ENCODE measurements at regions of chr3 and their contacts with region 1.

Region 1: GRCh38 chr3:71129611-71130431 is 453.7 kb downstream of the FOXP1 start:
- DNase-seq: no peak
- H3K4me3 ChIP-seq: peak overlapping the region; percentile 29 to 39
- H3K27ac ChIP-seq: peak overlapping the region; percentile 82 to 88
- H3K4me1 ChIP-seq: peaks cover 28% of the 10 kb centered on the region
- H3K27me3 ChIP-seq: no peaks in the 10 kb centered on the region
- CTCF ChIP-seq: no peak
- POLR2A ChIP-seq: no peak

Region 2: DNA sequence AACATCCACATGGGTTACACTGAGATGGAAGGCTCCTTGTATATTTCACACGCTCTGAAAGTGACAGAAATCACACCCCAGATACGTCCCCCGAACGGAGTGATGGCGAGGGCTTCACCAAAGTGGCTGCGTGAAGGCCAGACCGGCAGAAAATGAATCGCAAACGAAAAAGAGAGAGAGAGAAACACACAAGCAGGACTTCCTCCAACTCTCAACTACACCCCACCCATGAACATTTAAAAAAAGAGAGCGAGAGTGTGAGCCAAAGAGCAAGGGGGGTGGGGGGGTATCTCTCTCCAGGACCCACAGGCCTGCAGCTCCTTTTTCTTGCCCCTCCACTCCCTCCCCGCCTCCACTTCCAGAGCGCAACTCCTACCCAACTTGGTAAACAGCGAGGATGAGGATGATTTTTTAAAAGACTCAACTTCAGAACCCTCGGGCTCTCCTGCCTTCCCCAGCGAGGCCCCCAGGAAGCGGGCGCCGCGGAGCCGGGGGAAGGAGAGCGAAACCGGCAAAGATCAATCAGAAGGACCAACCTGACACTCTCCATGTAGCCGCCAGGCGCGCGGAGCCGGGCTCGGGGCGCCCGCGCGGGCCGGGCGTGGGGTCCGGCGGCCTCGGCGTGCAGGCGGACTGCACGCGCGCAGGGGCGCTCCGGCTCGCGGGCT is 65.4 kb before region 1 on chr3:
- intact Hi-C with region 1: loop called (anchors 2 kb)
- DNase-seq: peak; percentile 39
- H3K4me3 ChIP-seq: peak overlapping the region; percentile 58 to 67
- H3K27ac ChIP-seq: peak overlapping the region; percentile 96 to 99
- H3K4me1 ChIP-seq: peaks cover 11% of the 10 kb centered on the region
- H3K27me3 ChIP-seq: no peaks in the 10 kb centered on the region
- CTCF ChIP-seq: peak in 1 of 4 experiments; percentile 42
- POLR2A ChIP-seq: peak; percentile 21